ENCODE measurements at regions of chr3 and their contacts with region 1.

Region 1: GRCh38 chr3:65483480-65483879 is 555.2 kb downstream of the MAGI1 start:
- DNase-seq: peak; percentile 80

Region 2: GRCh38 chr3:65548848-65549625 is 65.6 kb after region 1 on chr3:
- intact Hi-C with region 1: loop called (anchors 5 kb)
- DNase-seq: no peak